ENCODE measurements at regions of chr10 and their contacts with region 1.

Region 1: DNA sequence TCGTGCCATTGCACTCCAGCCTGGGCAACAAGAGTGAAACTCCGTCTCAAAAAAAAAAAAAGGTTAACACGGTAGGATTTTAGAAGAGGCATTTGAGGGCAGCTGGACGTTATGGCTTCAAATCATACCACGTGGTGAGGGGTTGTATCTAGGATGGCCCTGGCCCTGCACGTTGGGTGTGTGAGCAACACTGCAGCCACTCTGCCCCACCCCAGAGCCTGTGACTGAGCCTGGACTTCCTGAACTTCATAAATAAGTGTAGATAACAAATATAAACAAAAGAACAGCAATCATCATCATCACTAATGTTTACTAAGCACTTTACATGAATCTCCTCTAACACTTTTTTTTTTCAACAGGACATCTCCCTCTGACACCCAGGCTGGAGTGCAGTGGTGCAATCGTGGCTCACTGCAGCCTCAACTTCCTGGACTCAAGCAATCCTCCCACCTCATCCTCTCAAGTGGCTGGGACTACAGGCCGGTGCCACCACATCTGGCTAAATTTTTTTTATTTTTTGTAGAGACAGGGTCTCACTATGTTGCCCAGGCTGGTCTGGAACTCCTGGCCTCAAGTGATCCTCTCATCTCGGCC is 169.5 kb upstream of the FRMD4A start:
- DNase-seq: no peak
- H3K4me3 Mint-ChIP-seq: no peak overlapping the region
- H3K27ac Mint-ChIP-seq: no peak overlapping the region
- H3K4me1 Mint-ChIP-seq: no peaks in the 10 kb centered on the region
- H3K27me3 Mint-ChIP-seq: peaks cover 11% of the 10 kb centered on the region
- CTCF ChIP-seq: no peak

Region 2: GRCh38 chr10:14456218-14456869 is 43.9 kb before region 1 on chr10:
- CTCF ChIA-PET with region 1: no interaction called
- POLR2A ChIA-PET with region 1: no interaction called
- intact Hi-C with region 1: no loop called
- DNase-seq: no peak
- H3K4me3 Mint-ChIP-seq: no peak overlapping the region
- H3K27ac Mint-ChIP-seq: no peak overlapping the region
- H3K4me1 Mint-ChIP-seq: no peaks in the 10 kb centered on the region
- H3K27me3 Mint-ChIP-seq: no peaks in the 10 kb centered on the region
- CTCF ChIP-seq: no peak

Region 3: DNA sequence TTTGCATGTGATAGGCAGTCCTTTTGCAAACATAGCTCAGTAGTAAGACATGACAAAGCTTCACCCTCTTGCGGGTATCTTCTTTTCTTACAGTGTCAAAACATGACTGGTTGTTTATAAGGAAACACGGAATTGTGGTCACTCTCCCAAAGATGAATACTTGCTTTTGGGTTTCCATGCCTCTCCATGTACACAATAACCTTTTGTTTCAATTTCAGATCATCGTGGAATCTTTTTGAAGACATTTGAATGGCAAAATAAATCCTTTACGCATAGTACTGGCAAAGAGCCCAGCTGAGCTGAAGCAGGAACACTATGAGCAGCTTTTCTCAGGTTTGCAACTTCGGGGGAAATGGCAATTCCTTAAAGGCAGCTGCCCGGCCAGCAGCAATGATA is 12.8 kb before region 1 on chr10:
- CTCF ChIA-PET with region 1: interaction called, 15 read pairs
- POLR2A ChIA-PET with region 1: no interaction called
- intact Hi-C with region 1: no loop called
- DNase-seq: no peak
- H3K4me3 Mint-ChIP-seq: no peak overlapping the region
- H3K27ac Mint-ChIP-seq: no peak overlapping the region
- H3K4me1 Mint-ChIP-seq: peaks cover 6% of the 10 kb centered on the region
- H3K27me3 Mint-ChIP-seq: peaks cover 51% of the 10 kb centered on the region
- CTCF ChIP-seq: no peak

Region 4: DNA sequence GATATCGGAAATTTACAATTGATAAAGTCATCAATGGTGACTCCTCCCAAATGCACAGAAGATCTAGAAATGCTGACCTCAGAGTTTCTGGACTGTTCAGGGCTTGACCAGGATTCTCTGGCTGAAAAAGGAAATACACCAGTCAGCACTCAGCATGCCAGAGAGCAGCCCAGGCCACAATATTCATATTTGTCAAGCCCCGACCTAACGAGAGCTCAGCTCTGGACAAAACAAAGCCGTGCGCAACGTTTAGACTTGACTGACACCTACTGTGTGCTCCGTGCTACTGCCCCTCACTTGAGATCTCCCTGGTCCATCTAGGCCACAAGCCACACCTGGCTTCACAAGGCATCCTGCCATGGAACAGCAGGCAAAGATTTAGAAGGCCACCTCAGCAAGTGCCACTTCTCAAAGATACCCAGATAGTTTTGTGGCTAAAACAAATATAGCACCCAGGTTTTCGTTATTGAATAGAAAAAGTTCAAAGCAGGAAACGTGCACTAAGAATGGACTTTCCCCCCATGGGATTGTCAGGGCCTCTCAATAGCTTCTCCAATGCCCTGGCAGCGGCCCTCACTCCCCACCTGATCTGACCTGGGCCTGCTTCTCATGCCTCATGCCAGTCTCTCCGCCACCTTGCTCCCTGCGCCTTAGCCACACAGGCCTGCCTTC is 56.2 kb after region 1 on chr10:
- CTCF ChIA-PET with region 1: no interaction called
- POLR2A ChIA-PET with region 1: no interaction called
- intact Hi-C with region 1: no loop called
- DNase-seq: no peak
- H3K4me3 Mint-ChIP-seq: no peak overlapping the region
- H3K27ac Mint-ChIP-seq: peak overlapping the region; percentile 23
- H3K4me1 Mint-ChIP-seq: peaks cover 24% of the 10 kb centered on the region
- H3K27me3 Mint-ChIP-seq: no peaks in the 10 kb centered on the region
- CTCF ChIP-seq: no peak

Region 5: GRCh38 chr10:14617852-14618251 is 117.6 kb after region 1 on chr10:
- CTCF ChIA-PET with region 1: no interaction called
- POLR2A ChIA-PET with region 1: no interaction called
- intact Hi-C with region 1: loop called (anchors 1 kb)
- DNase-seq: peak; percentile 79
- H3K4me3 Mint-ChIP-seq: no peak overlapping the region
- H3K27ac Mint-ChIP-seq: peak overlapping the region; percentile 62
- H3K4me1 Mint-ChIP-seq: peaks cover 12% of the 10 kb centered on the region
- H3K27me3 Mint-ChIP-seq: no peaks in the 10 kb centered on the region
- CTCF ChIP-seq: no peak

Region 6: GRCh38 chr10:14971867-14972448 is 471.7 kb after region 1 on chr10:
- CTCF ChIA-PET with region 1: interaction called, 3 read pairs
- POLR2A ChIA-PET with region 1: no interaction called
- intact Hi-C with region 1: loop called (anchors 5 kb)
- DNase-seq: peak; percentile 42
- H3K4me3 Mint-ChIP-seq: no peak overlapping the region
- H3K27ac Mint-ChIP-seq: no peak overlapping the region
- H3K4me1 Mint-ChIP-seq: peaks cover 9% of the 10 kb centered on the region
- H3K27me3 Mint-ChIP-seq: no peaks in the 10 kb centered on the region
- CTCF ChIP-seq: peak; percentile 47